T-cell (primary cell): ENCODE measurements at regions of chr16 and their contacts with region 1.

Region 1: DNA sequence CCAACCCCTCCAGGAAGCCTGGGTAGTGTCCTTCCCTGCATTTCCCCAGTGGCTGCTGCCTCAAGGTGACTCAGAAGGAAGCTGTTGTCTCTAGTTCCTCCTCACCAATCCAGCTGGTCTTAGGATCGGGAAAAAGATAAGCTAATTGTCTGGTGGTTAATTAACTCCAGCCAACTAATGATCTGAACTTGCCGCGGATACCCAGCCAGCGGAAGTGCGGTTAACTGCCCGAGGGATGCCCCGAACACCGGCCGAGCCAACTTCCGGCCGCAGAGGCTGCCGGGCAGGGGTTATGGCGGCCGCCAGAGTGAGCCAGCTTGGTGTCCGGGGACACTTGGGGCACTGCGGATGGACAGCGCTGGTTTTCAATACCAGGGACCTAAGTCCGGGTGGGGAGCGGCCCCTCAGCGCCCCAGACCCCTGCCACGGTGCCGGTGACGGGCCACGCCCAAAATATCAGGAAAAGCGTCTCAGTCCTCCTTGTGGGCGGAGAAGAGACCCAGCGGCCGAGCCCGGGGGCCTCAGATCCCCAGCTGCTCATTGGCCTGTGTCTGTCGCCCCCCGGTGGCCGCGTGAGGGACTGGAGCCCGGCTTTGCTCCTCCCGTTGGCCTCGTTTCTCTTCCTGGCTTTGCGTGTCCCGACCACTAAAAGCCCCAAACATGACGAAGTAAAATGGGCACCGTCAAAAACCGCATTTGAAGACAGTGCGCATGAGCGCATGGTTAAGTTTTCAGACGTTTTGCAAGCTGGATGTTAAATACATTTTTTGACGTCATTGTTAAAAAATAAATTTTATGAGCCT is 10.2 kb upstream of the PRSS22 start:
- DNase-seq: peak; percentile 87 to 97 (median 93)
- ATAC-seq: peak; percentile 91 to 97 (median 94)
- H3K4me3 ChIP-seq: peak overlapping the region; percentile 72
- H3K4me3 Mint-ChIP-seq: peak overlapping the region; percentile 78 to 86 (median 84)
- H3K27ac ChIP-seq: peak overlapping the region; percentile 78
- H3K27ac Mint-ChIP-seq: peak overlapping the region; percentile 78 to 84
- H3K4me1 ChIP-seq: peaks cover 3 to 17% of the 10 kb centered on the region in 2 experiments
- H3K4me1 Mint-ChIP-seq: peaks cover 0 to 26% (median 13%) of the 10 kb centered on the region in 3 donors
- H3K27me3 ChIP-seq: no peaks in the 10 kb centered on the region
- H3K27me3 Mint-ChIP-seq: peaks cover 2 to 4% of the 10 kb centered on the region in 2 donors

Region 2: DNA sequence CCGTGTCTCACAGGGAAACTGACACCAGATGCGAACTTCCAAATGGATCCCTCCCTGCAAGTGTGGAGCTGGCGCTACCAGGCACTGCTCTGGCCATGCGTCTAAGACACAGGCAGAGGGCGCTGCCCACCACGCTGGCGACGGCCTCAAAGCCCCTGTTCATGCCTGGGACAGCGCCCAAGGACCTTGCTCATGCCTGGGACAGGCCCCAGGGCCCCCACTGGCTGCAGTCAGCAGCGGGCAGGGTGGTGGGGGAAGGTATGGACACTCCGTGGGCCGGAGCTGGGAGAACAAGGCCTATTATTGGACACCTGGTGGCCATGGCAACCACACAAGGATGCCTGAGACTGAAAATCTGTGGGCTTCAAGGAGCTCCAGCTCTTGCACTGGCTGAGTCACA is 29.3 kb before region 1 on chr16:
- CTCF ChIA-PET with region 1: interaction called, 5 to 19 read pairs
- POLR2A ChIA-PET with region 1: no interaction called
- DNase-seq: peak in 33 of 35 experiments; percentile 10 to 77 (median 46)
- ATAC-seq: peak; percentile 51 to 75 (median 56)
- H3K4me3 ChIP-seq: no peak overlapping the region
- H3K4me3 Mint-ChIP-seq: no peak overlapping the region
- H3K27ac ChIP-seq: no peak overlapping the region
- H3K27ac Mint-ChIP-seq: no peak overlapping the region
- H3K4me1 ChIP-seq: peaks cover 22 to 47% of the 10 kb centered on the region in 2 experiments
- H3K4me1 Mint-ChIP-seq: peaks cover 16 to 50% (median 37%) of the 10 kb centered on the region in 3 donors
- H3K27me3 ChIP-seq: peaks cover 0 to 10% of the 10 kb centered on the region in 2 experiments
- H3K27me3 Mint-ChIP-seq: peaks cover 0 to 4% of the 10 kb centered on the region in 2 donors

Region 3: DNA sequence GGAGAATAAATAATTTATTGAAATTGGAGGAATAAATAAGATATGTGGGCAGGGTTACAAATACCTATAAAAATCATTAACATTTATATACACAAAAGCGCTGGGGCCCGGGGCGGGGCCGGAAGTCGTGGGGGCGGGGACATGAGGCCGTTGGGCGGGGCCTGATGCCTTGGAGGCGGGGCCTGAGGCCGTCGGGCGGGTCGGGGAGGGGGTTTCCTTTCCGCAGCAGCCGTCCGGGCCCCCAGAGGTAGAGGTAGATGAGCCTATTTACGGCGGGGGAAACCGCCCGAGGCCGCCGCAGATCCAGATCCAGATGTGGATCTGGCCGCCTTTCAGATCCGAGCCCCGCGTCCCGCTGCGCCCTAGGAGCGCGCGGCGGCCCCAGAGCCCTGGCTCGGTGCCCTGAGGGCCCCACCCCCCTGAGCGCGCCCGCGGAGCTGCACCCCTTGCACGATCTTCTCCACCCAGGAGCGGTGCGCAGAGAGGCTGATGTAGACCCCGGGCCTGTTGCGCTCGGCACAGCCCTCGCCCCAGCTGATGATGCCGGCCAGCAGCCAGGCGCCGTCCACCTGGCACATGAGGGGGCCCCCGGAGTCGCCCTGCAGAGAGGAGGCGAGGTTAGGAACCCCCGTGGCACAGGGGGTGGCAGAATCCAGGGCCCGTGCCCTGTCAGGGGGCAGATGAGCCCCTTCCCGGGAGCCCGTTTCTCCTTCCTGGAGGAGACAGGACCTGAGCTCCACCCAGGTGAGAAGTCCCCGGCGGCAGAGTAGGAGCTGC is 15.3 kb before region 1 on chr16:
- CTCF ChIA-PET with region 1: no interaction called
- POLR2A ChIA-PET with region 1: no interaction called
- DNase-seq: peak in 1 of 35 experiments; percentile 36
- ATAC-seq: no peak
- H3K4me3 ChIP-seq: no peak overlapping the region
- H3K4me3 Mint-ChIP-seq: no peak overlapping the region
- H3K27ac ChIP-seq: no peak overlapping the region
- H3K27ac Mint-ChIP-seq: no peak overlapping the region
- H3K4me1 ChIP-seq: peaks cover 0 to 11% of the 10 kb centered on the region in 2 experiments
- H3K4me1 Mint-ChIP-seq: peaks cover 3 to 7% (median 6%) of the 10 kb centered on the region in 3 donors
- H3K27me3 ChIP-seq: peaks cover 0 to 44% of the 10 kb centered on the region in 2 experiments
- H3K27me3 Mint-ChIP-seq: peaks cover 6 to 11% of the 10 kb centered on the region in 2 donors

Region 4: DNA sequence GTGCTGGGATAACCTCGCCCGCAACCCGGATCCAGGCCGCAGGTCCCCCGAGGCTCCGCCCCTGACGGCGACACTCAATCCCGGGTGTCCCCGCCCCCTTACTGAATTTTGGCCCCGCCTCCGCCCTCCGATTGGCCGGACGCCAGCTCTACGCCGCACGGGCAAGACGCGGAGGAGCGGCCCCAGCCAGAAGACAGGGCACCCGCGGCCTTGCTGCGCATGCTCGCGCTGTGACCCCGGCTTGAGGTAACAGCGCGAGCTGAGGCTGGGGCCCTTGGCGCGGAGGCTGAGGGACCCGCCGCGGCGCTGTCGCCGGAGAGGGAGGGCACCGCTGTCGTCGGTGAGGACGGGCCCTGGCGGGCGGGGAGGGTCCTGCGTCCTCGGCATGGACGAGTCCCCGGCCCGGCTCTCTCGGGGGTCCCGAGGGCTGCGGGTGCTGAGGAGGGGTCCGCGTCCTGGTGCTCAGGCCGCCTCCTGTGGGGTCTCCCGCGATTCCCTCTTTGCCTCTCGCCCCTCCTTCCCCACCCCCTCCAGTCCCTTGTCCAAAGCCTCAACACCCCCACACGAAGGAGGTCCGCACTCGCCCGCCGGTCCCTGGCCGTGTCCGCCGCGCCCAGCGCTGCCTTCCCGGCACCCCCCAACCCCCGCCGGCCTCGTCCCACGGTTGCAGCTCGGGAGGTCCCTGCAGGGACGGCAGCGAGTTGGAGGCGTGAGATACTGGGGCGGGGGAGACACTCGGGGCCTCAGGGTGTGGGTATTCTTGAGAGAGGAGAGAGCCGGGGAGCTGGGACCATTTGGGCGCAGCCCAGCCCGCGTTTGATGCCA is 15.1 kb after region 1 on chr16 and contains the start of gene FLYWCH2:
- CTCF ChIA-PET with region 1: interaction called in 1 of 2 experiments, 15 read pairs
- POLR2A ChIA-PET with region 1: interaction called in 1 of 2 experiments, 7 read pairs
- DNase-seq: peak; percentile 95 to 100 (median 99)
- ATAC-seq: peak; percentile 77 to 87 (median 80)
- H3K4me3 ChIP-seq: peak within 1 kb of the TSS; percentile 66 to 69
- H3K4me3 Mint-ChIP-seq: peak within 1 kb of the TSS; percentile 87 to 93 (median 90)
- H3K27ac ChIP-seq: peak within 1 kb of the TSS; percentile 83
- H3K27ac Mint-ChIP-seq: peak within 1 kb of the TSS; percentile 96 to 97
- H3K4me1 ChIP-seq: peaks cover 5 to 18% of the 10 kb centered on the region in 2 experiments
- H3K4me1 Mint-ChIP-seq: peaks cover 0 to 20% (median 11%) of the 10 kb centered on the region in 3 donors
- H3K27me3 ChIP-seq: no peaks in the 10 kb centered on the region
- H3K27me3 Mint-ChIP-seq: no peaks in the 10 kb centered on the region
- total RNA-seq, gene FLYWCH2: 12.1 to 31.4 (median 25.6) TPM

Region 5: GRCh38 chr16:2919511-2920255 is 51.5 kb after region 1 on chr16:
- CTCF ChIA-PET with region 1: no interaction called
- POLR2A ChIA-PET with region 1: interaction called in 1 of 2 experiments, 10 read pairs
- DNase-seq: peak in 31 of 35 experiments; percentile 6 to 86 (median 49)
- ATAC-seq: peak; percentile 53 to 80 (median 64)
- H3K4me3 ChIP-seq: no peak overlapping the region
- H3K4me3 Mint-ChIP-seq: no peak overlapping the region
- H3K27ac ChIP-seq: no peak overlapping the region
- H3K27ac Mint-ChIP-seq: peak overlapping the region in 1 of 2 donors; percentile 65
- H3K4me1 ChIP-seq: peaks cover 0 to 3% of the 10 kb centered on the region in 2 experiments
- H3K4me1 Mint-ChIP-seq: peaks cover 5 to 13% (median 7%) of the 10 kb centered on the region in 3 donors
- H3K27me3 ChIP-seq: no peaks in the 10 kb centered on the region
- H3K27me3 Mint-ChIP-seq: no peaks in the 10 kb centered on the region

Region 6: GRCh38 chr16:2926650-2927646 is 58.8 kb after region 1 on chr16:
- CTCF ChIA-PET with region 1: interaction called, 5 to 11 read pairs
- POLR2A ChIA-PET with region 1: no interaction called
- DNase-seq: peak; percentile 68 to 95 (median 84)
- ATAC-seq: peak; percentile 99 to 100 (median 99)
- H3K4me3 ChIP-seq: no peak overlapping the region
- H3K4me3 Mint-ChIP-seq: no peak overlapping the region
- H3K27ac ChIP-seq: peak overlapping the region; percentile 44
- H3K27ac Mint-ChIP-seq: peak overlapping the region in 1 of 2 donors; percentile 4
- H3K4me1 ChIP-seq: peaks cover 2 to 10% of the 10 kb centered on the region in 2 experiments
- H3K4me1 Mint-ChIP-seq: peaks cover 13 to 24% (median 14%) of the 10 kb centered on the region in 3 donors
- H3K27me3 ChIP-seq: no peaks in the 10 kb centered on the region
- H3K27me3 Mint-ChIP-seq: no peaks in the 10 kb centered on the region